ENCODE measurements at regions of chr9 and their contacts with region 1.

Region 1: DNA sequence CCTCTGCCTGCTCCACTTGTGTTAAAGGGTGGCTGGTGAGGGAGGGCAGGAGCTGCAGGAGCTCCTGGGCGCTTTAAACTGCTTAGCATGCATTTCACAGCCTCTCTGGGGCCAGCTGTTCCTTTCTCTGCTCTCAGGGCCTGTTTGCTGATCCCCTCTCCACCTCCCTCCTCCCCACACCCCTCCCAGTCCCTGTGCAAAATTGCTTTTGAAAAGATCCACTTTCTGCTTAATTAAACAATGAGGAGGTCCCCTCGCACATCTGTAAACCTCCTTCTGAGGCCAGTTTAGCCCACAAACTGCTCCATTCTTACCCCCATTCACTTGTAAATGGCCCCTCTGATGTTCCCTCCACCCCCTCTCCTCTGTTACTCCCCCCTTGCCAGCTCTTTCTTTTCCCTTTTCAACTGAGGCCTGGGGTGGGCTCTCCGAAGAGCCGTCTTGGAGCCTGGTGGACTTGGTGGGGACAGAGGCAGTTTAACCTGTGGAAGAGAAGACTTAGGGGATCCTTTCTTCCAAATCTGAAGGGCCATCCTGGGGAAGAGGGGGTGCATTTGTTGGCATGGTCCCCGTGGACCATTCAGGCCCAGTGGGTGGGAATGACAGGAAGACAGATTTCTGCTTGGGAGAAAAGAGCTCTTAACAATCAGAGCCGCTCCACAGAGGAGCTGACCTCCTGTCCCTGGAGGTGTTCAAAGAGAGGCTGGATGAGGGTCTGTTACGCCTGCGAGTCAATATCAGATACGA is 12.0 kb downstream of the URM1 start:
- DNase-seq: no peak
- H3K4me3 ChIP-seq: no peak overlapping the region
- H3K27ac ChIP-seq: no peak overlapping the region
- H3K4me1 ChIP-seq: no peaks in the 10 kb centered on the region
- H3K27me3 ChIP-seq: no peaks in the 10 kb centered on the region
- CTCF ChIP-seq: no peak

Region 2: GRCh38 chr9:127955294-127956035 is 427.7 kb before region 1 on chr9:
- CTCF ChIA-PET with region 1: no interaction called
- dilution Hi-C with region 1: no loop called
- in situ Hi-C with region 1: no loop called
- intact Hi-C with region 1: no loop called
- DNase-seq: peak; percentile 84
- H3K4me3 ChIP-seq: no peak overlapping the region
- H3K27ac ChIP-seq: no peak overlapping the region
- H3K4me1 ChIP-seq: peaks cover 28% of the 10 kb centered on the region
- H3K27me3 ChIP-seq: no peaks in the 10 kb centered on the region
- CTCF ChIP-seq: peak; percentile 29 to 55

Region 3: GRCh38 chr9:128479262-128479661 is 96.1 kb after region 1 on chr9:
- CTCF ChIA-PET with region 1: no interaction called
- dilution Hi-C with region 1: loop called (anchors 5 kb)
- in situ Hi-C with region 1: no loop called
- intact Hi-C with region 1: no loop called
- DNase-seq: no peak
- H3K4me3 ChIP-seq: no peak overlapping the region
- H3K27ac ChIP-seq: no peak overlapping the region
- H3K4me1 ChIP-seq: no peaks in the 10 kb centered on the region
- H3K27me3 ChIP-seq: no peaks in the 10 kb centered on the region
- CTCF ChIP-seq: no peak